ENCODE measurements at regions of chr1 and their contacts with region 1.

Region 1: GRCh38 chr1:226736908-226737818 is 1.9 kb downstream of the ITPKB start:
- DNase-seq: peak in 8 of 9 experiments; percentile 26 to 77 (median 61)
- ATAC-seq: peak; percentile 14
- H3K4me3 ChIP-seq: peak overlapping the region; percentile 99
- H3K4me3 Mint-ChIP-seq: peak overlapping the region; percentile 94
- H3K27ac ChIP-seq: peak overlapping the region; percentile 88 to 98
- H3K27ac Mint-ChIP-seq: peak overlapping the region; percentile 94
- H3K4me1 ChIP-seq: peaks cover 36% of the 10 kb centered on the region
- H3K4me1 Mint-ChIP-seq: peaks cover 44% of the 10 kb centered on the region
- H3K27me3 ChIP-seq: no peaks in the 10 kb centered on the region
- H3K27me3 Mint-ChIP-seq: no peaks in the 10 kb centered on the region
- CTCF ChIP-seq: no peak

Region 2: DNA sequence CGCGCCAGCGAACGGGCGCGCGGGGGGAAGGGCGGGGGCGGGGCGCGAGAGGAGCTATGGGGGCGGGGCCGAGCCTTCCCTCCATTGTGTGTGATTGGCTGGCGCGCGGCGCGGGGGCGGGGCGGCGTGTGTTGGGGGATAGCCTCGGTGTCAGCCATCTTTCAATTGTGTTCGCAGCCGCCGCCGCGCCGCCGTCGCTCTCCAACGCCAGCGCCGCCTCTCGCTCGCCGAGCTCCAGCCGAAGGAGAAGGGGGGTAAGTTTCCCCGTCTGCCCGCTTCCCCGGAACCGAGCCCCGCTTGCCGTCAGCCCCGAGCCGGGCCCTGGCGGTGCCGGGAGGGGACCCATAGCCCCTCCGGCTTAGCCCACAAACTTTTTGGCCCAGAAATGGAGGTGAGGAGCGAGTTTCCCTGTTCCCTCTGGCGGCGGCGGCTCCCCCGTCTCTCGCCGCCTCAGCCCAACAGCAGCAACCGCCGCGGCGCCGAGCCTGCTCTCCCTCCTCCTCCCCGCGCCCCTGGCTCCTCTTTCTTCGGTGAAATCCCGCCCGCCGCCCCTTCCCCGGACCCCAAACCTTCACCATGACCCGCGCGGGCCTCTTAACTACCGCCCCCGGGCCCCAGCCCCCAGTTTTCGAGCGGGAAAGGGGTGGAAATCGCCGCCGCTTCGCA is 674.5 kb before region 1 on chr1 and contains the start of gene H3-3A:
- CTCF ChIA-PET with region 1: no interaction called
- POLR2A ChIA-PET with region 1: no interaction called
- intact Hi-C with region 1: loop called (anchors 2 to 10 kb)
- DNase-seq: peak; percentile 96 to 99 (median 98)
- ATAC-seq: peak; percentile 85
- H3K4me3 ChIP-seq: peak within 1 kb of the TSS; percentile 84 to 92
- H3K4me3 Mint-ChIP-seq: peak within 1 kb of the TSS; percentile 100
- H3K27ac ChIP-seq: peak within 1 kb of the TSS; percentile 90 to 91
- H3K27ac Mint-ChIP-seq: peak within 1 kb of the TSS; percentile 100
- H3K4me1 ChIP-seq: peaks cover 42% of the 10 kb centered on the region
- H3K4me1 Mint-ChIP-seq: peaks cover 49% of the 10 kb centered on the region
- H3K27me3 ChIP-seq: no peaks in the 10 kb centered on the region
- H3K27me3 Mint-ChIP-seq: no peaks in the 10 kb centered on the region
- CTCF ChIP-seq: no peak
- total RNA-seq, gene H3-3A: 439 to 447 TPM

Region 3: DNA sequence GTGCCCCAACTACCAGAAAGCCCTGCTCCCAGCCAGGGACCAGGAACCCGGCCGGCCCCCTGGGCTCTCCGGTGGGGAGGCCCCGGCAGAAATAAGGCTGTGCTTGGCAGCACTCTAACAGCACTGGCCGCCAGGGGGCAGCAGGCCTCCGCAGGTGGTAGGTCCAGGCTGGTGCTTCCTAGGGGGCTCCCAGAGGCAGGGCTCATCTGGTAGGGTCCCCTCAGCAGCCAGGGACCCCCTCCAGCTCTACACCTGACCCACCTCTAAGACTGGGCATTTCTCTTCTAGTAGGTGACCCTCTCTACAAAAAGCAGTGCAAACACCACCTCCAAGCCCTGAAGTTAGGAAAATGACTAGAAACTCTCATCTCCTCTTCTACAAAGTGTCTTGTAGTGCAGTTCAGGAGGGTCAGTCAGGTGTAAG is 103.0 kb before region 1 on chr1:
- CTCF ChIA-PET with region 1: interaction called, 7 read pairs
- POLR2A ChIA-PET with region 1: interaction called, 5 read pairs
- intact Hi-C with region 1: loop called (anchors 2 to 5 kb)
- DNase-seq: peak; percentile 65 to 91 (median 85)
- ATAC-seq: peak; percentile 74
- H3K4me3 ChIP-seq: no peak overlapping the region
- H3K4me3 Mint-ChIP-seq: peak overlapping the region; percentile 7
- H3K27ac ChIP-seq: peak overlapping the region; percentile 4 to 42
- H3K27ac Mint-ChIP-seq: peak overlapping the region; percentile 87
- H3K4me1 ChIP-seq: peaks cover 59% of the 10 kb centered on the region
- H3K4me1 Mint-ChIP-seq: peaks cover 52% of the 10 kb centered on the region
- H3K27me3 ChIP-seq: no peaks in the 10 kb centered on the region
- H3K27me3 Mint-ChIP-seq: no peaks in the 10 kb centered on the region
- CTCF ChIP-seq: peak; percentile 96

Region 4: GRCh38 chr1:226656601-226657277 is 80.4 kb before region 1 on chr1:
- CTCF ChIA-PET with region 1: interaction called, 4 read pairs
- POLR2A ChIA-PET with region 1: interaction called, 12 read pairs
- intact Hi-C with region 1: loop called (anchors 1 to 2 kb)
- DNase-seq: peak in 6 of 9 experiments; percentile 39 to 91 (median 71)
- ATAC-seq: peak; percentile 68
- H3K4me3 ChIP-seq: no peak overlapping the region
- H3K4me3 Mint-ChIP-seq: peak overlapping the region; percentile 61
- H3K27ac ChIP-seq: no peak overlapping the region
- H3K27ac Mint-ChIP-seq: no peak overlapping the region
- H3K4me1 ChIP-seq: no peaks in the 10 kb centered on the region
- H3K4me1 Mint-ChIP-seq: peaks cover 30% of the 10 kb centered on the region
- H3K27me3 ChIP-seq: no peaks in the 10 kb centered on the region
- H3K27me3 Mint-ChIP-seq: no peaks in the 10 kb centered on the region
- CTCF ChIP-seq: no peak

Region 5: DNA sequence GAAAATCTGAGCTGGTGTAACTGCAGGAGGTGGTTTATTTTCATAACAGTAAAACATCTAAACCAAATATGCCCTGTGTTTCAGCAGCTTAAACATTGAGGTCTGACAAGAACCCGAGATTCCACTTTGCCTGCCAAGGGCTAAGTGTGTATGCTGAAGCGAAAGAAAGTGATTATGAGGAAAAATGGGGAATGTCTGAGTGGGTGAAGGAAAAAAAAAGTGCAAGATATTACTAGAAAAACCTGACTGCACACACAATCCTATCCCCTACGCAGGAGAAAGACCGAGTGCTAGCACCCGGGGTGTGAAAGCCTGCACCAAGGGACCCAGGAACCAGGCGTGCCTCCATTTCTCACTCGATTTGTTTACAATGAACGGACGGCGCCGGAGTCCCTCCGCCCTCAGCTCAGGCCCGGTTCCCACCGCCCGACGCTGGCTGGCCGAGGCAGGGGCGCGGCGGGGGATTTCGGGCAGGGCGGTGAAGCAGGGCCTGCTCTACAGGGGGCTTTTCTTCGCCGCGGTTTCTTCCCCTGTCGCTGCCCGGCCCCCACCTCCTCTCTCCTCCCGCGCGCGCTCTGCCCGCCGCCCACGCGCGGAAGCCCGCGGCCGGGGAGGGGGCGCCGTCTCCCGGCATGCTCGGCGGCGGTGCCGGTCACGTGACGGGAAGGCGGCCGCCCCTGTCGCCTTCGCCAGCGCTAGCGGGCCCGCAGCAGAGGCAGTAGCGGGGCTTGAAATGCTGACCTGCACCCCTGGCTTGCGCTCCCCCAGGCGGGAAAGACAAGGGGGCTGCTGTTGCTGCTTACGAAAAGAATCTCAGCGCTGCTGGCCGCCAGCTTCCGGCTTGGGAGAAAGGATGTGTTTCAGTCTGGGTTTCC is 34.0 kb before region 1 on chr1:
- CTCF ChIA-PET with region 1: interaction called, 6 read pairs
- POLR2A ChIA-PET with region 1: interaction called, 8 read pairs
- intact Hi-C with region 1: loop called (anchors 1 to 2 kb)
- DNase-seq: peak; percentile 56 to 94 (median 80)
- ATAC-seq: peak; percentile 82
- H3K4me3 ChIP-seq: peak overlapping the region; percentile 51 to 54
- H3K4me3 Mint-ChIP-seq: peak overlapping the region; percentile 72
- H3K27ac ChIP-seq: peak overlapping the region; percentile 72 to 92
- H3K27ac Mint-ChIP-seq: peak overlapping the region; percentile 92
- H3K4me1 ChIP-seq: peaks cover 85% of the 10 kb centered on the region
- H3K4me1 Mint-ChIP-seq: peaks cover 88% of the 10 kb centered on the region
- H3K27me3 ChIP-seq: no peaks in the 10 kb centered on the region
- H3K27me3 Mint-ChIP-seq: no peaks in the 10 kb centered on the region
- CTCF ChIP-seq: no peak

Region 6: GRCh38 chr1:226723657-226724532 is 13.3 kb before region 1 on chr1:
- CTCF ChIA-PET with region 1: interaction called, 7 read pairs
- POLR2A ChIA-PET with region 1: interaction called, 10 read pairs
- intact Hi-C with region 1: loop called in 1 of 2 experiments (anchors 1 kb)
- DNase-seq: peak in 3 of 9 experiments; percentile 8 to 34 (median 25)
- ATAC-seq: peak; percentile 20
- H3K4me3 ChIP-seq: peak overlapping the region; percentile 19 to 31
- H3K4me3 Mint-ChIP-seq: peak overlapping the region; percentile 80
- H3K27ac ChIP-seq: peak overlapping the region; percentile 25 to 66
- H3K27ac Mint-ChIP-seq: peak overlapping the region; percentile 94
- H3K4me1 ChIP-seq: peaks cover 96% of the 10 kb centered on the region
- H3K4me1 Mint-ChIP-seq: peaks cover 88% of the 10 kb centered on the region
- H3K27me3 ChIP-seq: no peaks in the 10 kb centered on the region
- H3K27me3 Mint-ChIP-seq: no peaks in the 10 kb centered on the region
- CTCF ChIP-seq: no peak

Region 7: GRCh38 chr1:226827968-226828513 is 90.9 kb after region 1 on chr1:
- CTCF ChIA-PET with region 1: interaction called, 14 read pairs
- POLR2A ChIA-PET with region 1: interaction called, 8 read pairs
- intact Hi-C with region 1: loop called (anchors 1 to 5 kb)
- DNase-seq: peak; percentile 86 to 98 (median 93)
- ATAC-seq: peak; percentile 99
- H3K4me3 ChIP-seq: peak overlapping the region; percentile 3 to 21
- H3K4me3 Mint-ChIP-seq: peak overlapping the region; percentile 58
- H3K27ac ChIP-seq: peak overlapping the region; percentile 46 to 73
- H3K27ac Mint-ChIP-seq: peak overlapping the region; percentile 69
- H3K4me1 ChIP-seq: peaks cover 10% of the 10 kb centered on the region
- H3K4me1 Mint-ChIP-seq: peaks cover 20% of the 10 kb centered on the region
- H3K27me3 ChIP-seq: no peaks in the 10 kb centered on the region
- H3K27me3 Mint-ChIP-seq: no peaks in the 10 kb centered on the region
- CTCF ChIP-seq: peak; percentile 94